ENCODE measurements at regions of chr6 and their contacts with region 1.

Region 1: DNA sequence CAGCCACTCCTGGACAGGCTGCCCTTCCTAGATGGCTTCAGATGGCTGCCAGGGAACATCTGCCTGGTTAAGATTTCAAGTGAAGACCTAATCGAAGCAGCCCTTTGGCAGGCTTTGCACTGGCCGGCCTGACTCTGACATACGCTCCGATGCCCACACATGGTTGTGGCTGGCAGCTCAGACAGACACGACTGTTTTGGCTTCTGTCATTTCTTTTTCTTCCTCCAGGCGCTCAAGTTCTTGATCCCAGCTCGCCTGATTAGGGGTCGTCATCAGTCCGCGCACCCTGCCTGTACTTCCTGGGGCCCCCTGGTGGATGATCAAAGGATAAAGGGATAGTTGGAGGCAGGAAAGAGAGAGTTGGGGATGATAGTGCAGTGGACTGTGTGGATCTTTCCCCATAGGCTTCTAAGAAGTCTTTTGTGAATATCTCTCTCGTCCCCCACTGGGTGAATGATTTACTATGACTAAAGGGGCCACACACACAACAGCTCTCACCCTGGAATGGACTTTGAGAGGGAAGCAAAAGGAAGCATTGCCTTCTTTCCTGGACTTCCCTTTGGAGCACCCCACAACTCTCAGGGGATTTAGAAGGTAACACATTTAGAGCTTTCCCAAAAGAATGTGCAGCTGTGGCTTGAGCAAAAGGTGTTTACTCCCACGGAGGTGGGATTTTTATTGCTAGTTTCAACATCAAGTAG is 21.4 kb upstream of the TRAM2 start:
- DNase-seq: peak; percentile 69 to 78
- H3K4me3 ChIP-seq: no peak overlapping the region
- H3K27ac ChIP-seq: peak overlapping the region; percentile 49 to 52
- H3K4me1 ChIP-seq: peaks cover 0 to 5% of the 10 kb centered on the region in 2 donors
- H3K27me3 ChIP-seq: no peaks in the 10 kb centered on the region
- CTCF ChIP-seq: peak; percentile 60 to 75 (median 70)
- POLR2A ChIP-seq: no peak

Region 2: GRCh38 chr6:52664186-52664990 is 66.1 kb after region 1 on chr6:
- intact Hi-C with region 1: loop called (anchors 10 kb)
- DNase-seq: peak; percentile 81 to 91
- H3K4me3 ChIP-seq: peak overlapping the region; percentile 64 to 81
- H3K27ac ChIP-seq: peak overlapping the region; percentile 77 to 78
- H3K4me1 ChIP-seq: no peaks in the 10 kb centered on the region
- H3K27me3 ChIP-seq: no peaks in the 10 kb centered on the region
- CTCF ChIP-seq: no peak
- POLR2A ChIP-seq: peak; percentile 69 to 74

Measured in uterus (tissue), 4 donors.